PC-9 (cell line): ENCODE measurements at regions of chr12 and their contacts with region 1.

Region 1: DNA sequence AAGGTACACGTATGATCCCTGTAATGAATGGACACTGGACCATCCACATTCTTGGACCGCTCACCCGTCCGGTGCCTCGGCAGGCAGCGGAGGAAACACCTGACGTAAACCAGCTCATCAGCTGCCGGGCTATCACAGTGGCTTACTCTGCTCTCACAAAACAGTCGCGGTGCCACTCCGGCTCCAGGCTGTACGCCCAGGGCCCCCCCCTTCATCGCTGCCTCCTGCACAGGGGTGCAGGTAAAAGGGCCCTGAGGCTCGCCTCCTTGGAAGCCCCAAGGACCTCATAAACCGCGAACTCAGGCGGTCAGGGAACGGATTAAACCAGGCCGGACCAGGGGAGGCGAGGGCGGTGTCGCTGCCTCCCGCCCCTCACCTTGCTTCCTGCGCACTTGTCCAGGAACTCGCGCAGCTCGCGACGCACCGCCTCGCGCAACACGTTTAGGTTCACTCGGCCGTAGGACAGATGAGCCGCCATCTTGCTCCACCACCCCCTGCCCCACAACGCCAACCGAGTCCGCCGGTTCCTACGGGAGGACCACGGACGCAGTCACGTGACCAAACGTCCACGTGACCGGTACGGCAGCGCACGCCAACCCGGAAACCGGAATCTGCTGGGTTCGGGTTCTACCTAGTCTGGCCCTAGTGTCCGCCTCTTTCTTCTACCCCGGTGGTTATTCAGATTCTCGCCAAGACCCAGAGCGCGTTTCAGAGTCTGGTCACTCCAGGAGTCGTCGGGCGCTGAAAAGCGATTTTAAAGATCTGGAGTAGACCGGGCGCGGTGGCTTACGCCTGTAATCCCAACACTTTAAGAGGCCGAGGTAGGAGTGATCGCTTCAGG is at the start of gene VPS33A:
- DNase-seq: peak; percentile 91 to 95
- H3K4me3 ChIP-seq: peak within 1 kb of the TSS; percentile 93
- H3K27ac ChIP-seq: peak within 1 kb of the TSS; percentile 80
- H3K4me1 ChIP-seq: peaks cover 3% of the 10 kb centered on the region; the same call in 1 of the 2 replicates
- H3K27me3 ChIP-seq: no peaks in the 10 kb centered on the region
- CTCF ChIP-seq: no peak
- total RNA-seq, gene VPS33A: 18.1 and 20.2 TPM in 2 replicates

Region 2: DNA sequence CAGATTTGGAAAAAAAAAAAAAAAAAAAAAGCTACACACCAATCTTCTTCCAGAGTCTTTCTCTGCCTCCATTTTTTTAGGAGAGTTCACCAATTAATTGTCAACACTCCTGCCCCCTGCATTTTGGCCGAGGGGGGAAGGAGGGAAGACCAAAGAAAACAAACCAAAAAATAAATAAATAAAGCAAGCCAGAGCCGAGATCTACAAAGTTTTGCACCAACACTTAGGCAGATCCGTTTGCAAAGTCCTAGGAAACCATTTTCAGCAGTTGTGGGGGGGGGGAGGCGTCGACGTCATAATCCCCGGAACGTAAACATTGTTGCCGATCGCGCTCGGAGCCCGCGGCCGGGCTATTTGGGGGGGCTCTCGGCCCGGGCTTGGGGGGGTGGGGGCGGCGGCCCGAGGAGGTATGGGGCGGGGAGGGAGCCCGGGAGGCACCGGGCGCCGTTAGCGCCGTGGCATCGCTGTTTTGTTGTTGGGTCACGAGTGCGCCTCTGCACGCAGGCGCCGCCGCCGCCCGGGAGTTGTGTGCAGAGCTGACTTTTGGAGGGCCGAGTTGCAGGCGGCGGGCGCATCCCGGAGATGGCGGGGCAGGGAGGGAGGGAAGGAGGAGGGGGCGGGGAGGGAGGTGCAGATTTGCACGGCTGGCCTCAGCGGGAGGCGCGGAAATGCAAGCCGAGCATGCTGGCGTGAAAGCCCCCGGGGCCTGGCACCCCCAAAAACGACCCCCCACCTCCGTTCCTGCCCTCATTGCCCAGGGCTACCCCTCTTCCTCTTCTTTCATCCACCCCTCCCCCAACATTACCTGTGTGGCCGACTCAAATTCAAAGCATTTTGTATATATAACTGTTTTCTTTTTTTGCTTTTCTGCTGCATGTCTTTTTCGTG is 685.9 kb before region 1 on chr12:
- CTCF ChIA-PET with region 1: no interaction called
- POLR2A ChIA-PET with region 1: no interaction called
- intact Hi-C with region 1: loop called (anchors 5 kb)
- DNase-seq: peak in 1 of 2 experiments; percentile 54
- H3K4me3 ChIP-seq: peak overlapping the region; percentile 86
- H3K27ac ChIP-seq: no peak overlapping the region
- H3K4me1 ChIP-seq: peaks cover 39% of the 10 kb centered on the region
- H3K27me3 ChIP-seq: no peaks in the 10 kb centered on the region
- CTCF ChIP-seq: no peak

Region 3: GRCh38 chr12:122051231-122051876 is 214.8 kb before region 1 on chr12:
- CTCF ChIA-PET with region 1: no interaction called
- POLR2A ChIA-PET with region 1: no interaction called
- intact Hi-C with region 1: loop called (anchors 5 kb)
- DNase-seq: no peak
- H3K4me3 ChIP-seq: no peak overlapping the region
- H3K27ac ChIP-seq: no peak overlapping the region
- H3K4me1 ChIP-seq: no peaks in the 10 kb centered on the region
- H3K27me3 ChIP-seq: no peaks in the 10 kb centered on the region
- CTCF ChIP-seq: no peak

Region 4: GRCh38 chr12:122225683-122226407 is 40.3 kb before region 1 on chr12 and contains the start of gene DIABLO:
- CTCF ChIA-PET with region 1: no interaction called
- POLR2A ChIA-PET with region 1: interaction called, 7 read pairs
- intact Hi-C with region 1: loop called (anchors 1 kb)
- DNase-seq: peak; percentile 96 to 100
- H3K4me3 ChIP-seq: peak within 1 kb of the TSS; percentile 97
- H3K27ac ChIP-seq: peak within 1 kb of the TSS; percentile 74
- H3K4me1 ChIP-seq: peaks cover 21% of the 10 kb centered on the region
- H3K27me3 ChIP-seq: no peaks in the 10 kb centered on the region
- CTCF ChIP-seq: no peak
- total RNA-seq, gene DIABLO: 47.9 and 51.7 TPM in 2 replicates

Region 5: GRCh38 chr12:122366685-122367475 is 100.7 kb after region 1 on chr12:
- CTCF ChIA-PET with region 1: interaction called, 11 read pairs
- POLR2A ChIA-PET with region 1: no interaction called
- intact Hi-C with region 1: no loop called
- DNase-seq: peak; percentile 10 to 71
- H3K4me3 ChIP-seq: no peak overlapping the region
- H3K27ac ChIP-seq: peak overlapping the region; percentile 79
- H3K4me1 ChIP-seq: peaks cover 18% of the 10 kb centered on the region
- H3K27me3 ChIP-seq: no peaks in the 10 kb centered on the region
- CTCF ChIP-seq: no peak